ENCODE measurements at regions of chr9 and their contacts with region 1.

Region 1: GRCh38 chr9:121074635-121075385 is at the start of gene CNTRL:
- DNase-seq: peak; percentile 98
- ATAC-seq: peak; percentile 91
- H3K4me3 Mint-ChIP-seq: peak within 1 kb of the TSS; percentile 97
- H3K27ac Mint-ChIP-seq: peak within 1 kb of the TSS; percentile 97
- H3K4me1 Mint-ChIP-seq: peaks cover 38% of the 10 kb centered on the region
- H3K27me3 Mint-ChIP-seq: no peaks in the 10 kb centered on the region
- CTCF ChIP-seq: no peak
- total RNA-seq, gene CNTRL: 62.8 to 69.8 TPM

Region 2: GRCh38 chr9:121121582-121122087 is 46.8 kb after region 1 on chr9:
- CTCF ChIA-PET with region 1: interaction called, 3 read pairs
- POLR2A ChIA-PET with region 1: interaction called, 7 read pairs
- intact Hi-C with region 1: loop called (anchors 5 kb)
- DNase-seq: peak; percentile 99
- ATAC-seq: peak; percentile 99
- H3K4me3 Mint-ChIP-seq: peak overlapping the region; percentile 84
- H3K27ac Mint-ChIP-seq: peak overlapping the region; percentile 95
- H3K4me1 Mint-ChIP-seq: peaks cover 47% of the 10 kb centered on the region
- H3K27me3 Mint-ChIP-seq: no peaks in the 10 kb centered on the region
- CTCF ChIP-seq: no peak

Measured in activated CD8-positive, alpha-beta T cell treated with anti-CD3 and anti-CD28 coated beads for 36 hours (primary cell).